GM12878 (cell line): ENCODE measurements at regions of chr17 and their contacts with region 1.

Region 1: GRCh38 chr17:27407916-27408846 is 48.1 kb upstream of the KSR1 start:
- DNase-seq: no peak
- ATAC-seq: no peak
- H3K4me3 ChIP-seq: no peak overlapping the region
- H3K27ac ChIP-seq: no peak overlapping the region
- H3K4me1 ChIP-seq: peaks cover 2% of the 10 kb centered on the region; the same call in 1 of the 2 replicates
- H3K27me3 ChIP-seq: peaks cover 1 to 3% of the 10 kb centered on the region in 2 experiments; a peak in 1 of 4 replicates
- CTCF ChIP-seq: no peak
- EP300 ChIP-seq: no peak
- POLR2A ChIP-seq: no peak
- RAD21 ChIP-seq: no peak

Region 2: GRCh38 chr17:27323524-27324206 is 84.5 kb before region 1 on chr17:
- CTCF ChIA-PET with region 1: no interaction called
- POLR2A ChIA-PET with region 1: no interaction called
- RAD21 ChIA-PET with region 1: no interaction called
- SMC1A ChIA-PET with region 1: no interaction called
- in situ Hi-C with region 1: no loop called
- intact Hi-C with region 1: no loop called
- DNase-seq: no peak
- ATAC-seq: no peak
- H3K4me3 ChIP-seq: no peak overlapping the region
- H3K27ac ChIP-seq: no peak overlapping the region
- H3K4me1 ChIP-seq: no peaks in the 10 kb centered on the region
- H3K27me3 ChIP-seq: no peaks in the 10 kb centered on the region
- CTCF ChIP-seq: no peak
- EP300 ChIP-seq: no peak
- POLR2A ChIP-seq: no peak
- RAD21 ChIP-seq: no peak

Region 3: GRCh38 chr17:27345141-27345904 is 62.9 kb before region 1 on chr17:
- CTCF ChIA-PET with region 1: no interaction called
- POLR2A ChIA-PET with region 1: no interaction called
- RAD21 ChIA-PET with region 1: no interaction called
- SMC1A ChIA-PET with region 1: no interaction called
- in situ Hi-C with region 1: loop called (anchors 10 kb)
- intact Hi-C with region 1: no loop called
- DNase-seq: no peak
- ATAC-seq: no peak
- H3K4me3 ChIP-seq: no peak overlapping the region
- H3K27ac ChIP-seq: no peak overlapping the region
- H3K4me1 ChIP-seq: peaks cover 17% of the 10 kb centered on the region
- H3K27me3 ChIP-seq: no peaks in the 10 kb centered on the region
- CTCF ChIP-seq: no peak
- EP300 ChIP-seq: no peak
- POLR2A ChIP-seq: no peak
- RAD21 ChIP-seq: no peak

Region 4: DNA sequence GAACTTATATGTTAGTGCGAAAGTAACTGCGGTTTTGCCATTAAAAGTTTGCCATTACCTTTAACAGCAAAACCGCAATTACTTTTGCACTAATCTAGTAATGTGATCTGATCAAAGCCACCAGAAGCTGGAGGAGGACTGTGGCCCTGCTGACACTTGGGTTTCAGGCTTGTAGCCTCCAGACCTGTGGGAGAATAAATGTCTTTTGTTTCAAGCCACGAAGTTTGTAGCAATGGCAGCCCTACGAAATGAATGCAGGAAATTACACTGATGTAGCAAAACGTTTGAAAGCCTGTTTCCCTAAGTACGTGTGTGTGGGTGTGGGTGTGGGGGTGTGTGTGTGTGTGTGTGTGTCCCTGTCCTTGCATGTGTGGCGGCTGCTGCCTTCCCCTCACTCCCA is 47.7 kb before region 1 on chr17:
- CTCF ChIA-PET with region 1: no interaction called
- POLR2A ChIA-PET with region 1: interaction called, 13 read pairs
- RAD21 ChIA-PET with region 1: no interaction called
- SMC1A ChIA-PET with region 1: interaction called, 4 read pairs
- in situ Hi-C with region 1: no loop called
- intact Hi-C with region 1: no loop called
- DNase-seq: no peak
- ATAC-seq: no peak
- H3K4me3 ChIP-seq: no peak overlapping the region
- H3K27ac ChIP-seq: no peak overlapping the region
- H3K4me1 ChIP-seq: no peaks in the 10 kb centered on the region
- H3K27me3 ChIP-seq: no peaks in the 10 kb centered on the region
- CTCF ChIP-seq: no peak
- EP300 ChIP-seq: no peak
- POLR2A ChIP-seq: no peak
- RAD21 ChIP-seq: no peak

Region 5: DNA sequence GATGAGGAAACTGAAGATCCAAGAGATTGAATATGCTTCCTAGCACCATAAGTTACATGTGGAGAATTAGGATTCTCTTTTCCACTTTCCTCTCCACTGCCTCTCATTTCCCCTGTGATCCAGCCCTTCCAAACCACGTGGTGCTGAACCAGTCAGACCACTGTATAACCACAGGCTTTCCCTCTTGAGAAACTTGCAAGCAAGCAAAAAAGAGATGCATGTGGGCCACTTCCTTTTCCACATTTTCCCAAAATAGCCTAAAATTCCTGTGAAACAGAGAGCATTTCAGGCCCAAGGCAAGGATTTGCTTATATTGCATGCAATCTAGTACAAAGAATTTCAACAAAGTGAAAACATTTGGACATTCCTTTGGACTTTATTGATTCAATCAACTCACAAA is 11.2 kb before region 1 on chr17:
- CTCF ChIA-PET with region 1: no interaction called
- POLR2A ChIA-PET with region 1: no interaction called
- RAD21 ChIA-PET with region 1: no interaction called
- SMC1A ChIA-PET with region 1: interaction called, 4 read pairs
- in situ Hi-C with region 1: no loop called
- intact Hi-C with region 1: loop called (anchors 1 kb)
- DNase-seq: no peak
- ATAC-seq: no peak
- H3K4me3 ChIP-seq: no peak overlapping the region
- H3K27ac ChIP-seq: no peak overlapping the region
- H3K4me1 ChIP-seq: no peaks in the 10 kb centered on the region
- H3K27me3 ChIP-seq: no peaks in the 10 kb centered on the region; a peak in 1 of 4 replicates
- CTCF ChIP-seq: no peak
- EP300 ChIP-seq: no peak
- POLR2A ChIP-seq: no peak
- RAD21 ChIP-seq: no peak

Region 6: DNA sequence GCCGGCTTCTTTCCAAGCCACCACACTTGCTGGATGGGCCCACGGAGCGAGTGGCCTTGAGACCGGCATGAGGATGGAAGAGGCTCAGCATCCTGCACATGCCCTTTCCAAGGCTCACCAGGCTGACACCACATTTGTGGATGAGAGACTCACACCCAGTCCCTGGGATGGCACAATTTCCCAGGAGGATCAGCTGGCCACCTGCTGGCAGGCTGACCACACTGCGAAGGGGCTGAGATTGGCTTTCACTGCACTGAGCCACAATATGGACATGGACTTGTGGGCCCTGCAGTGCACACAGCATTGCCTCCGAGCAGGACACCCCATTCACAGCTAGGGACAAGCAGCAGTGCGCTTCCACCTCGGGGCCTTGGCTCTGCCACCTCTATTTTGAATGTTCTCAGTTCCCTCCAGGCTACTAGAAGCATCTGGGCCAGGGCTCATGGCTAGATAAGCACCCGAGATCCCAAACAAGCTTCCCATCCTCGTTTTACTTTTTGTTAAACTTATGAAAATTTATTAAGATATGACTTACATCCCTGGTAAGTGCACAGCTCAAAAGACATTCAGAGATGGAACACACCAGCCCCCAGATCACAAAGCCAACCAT is 22.8 kb after region 1 on chr17:
- CTCF ChIA-PET with region 1: no interaction called
- POLR2A ChIA-PET with region 1: no interaction called
- RAD21 ChIA-PET with region 1: no interaction called
- SMC1A ChIA-PET with region 1: interaction called, 4 read pairs
- in situ Hi-C with region 1: no loop called
- intact Hi-C with region 1: loop called (anchors 1 kb)
- DNase-seq: no peak
- ATAC-seq: peak; percentile 76
- H3K4me3 ChIP-seq: no peak overlapping the region
- H3K27ac ChIP-seq: no peak overlapping the region
- H3K4me1 ChIP-seq: no peaks in the 10 kb centered on the region
- H3K27me3 ChIP-seq: no peaks in the 10 kb centered on the region
- CTCF ChIP-seq: peak; percentile 25 to 57 (median 30); a peak in 2 of 6 replicates
- EP300 ChIP-seq: no peak
- POLR2A ChIP-seq: no peak
- RAD21 ChIP-seq: no peak

Region 7: GRCh38 chr17:27471321-27472269 is 63.4 kb after region 1 on chr17:
- CTCF ChIA-PET with region 1: no interaction called
- POLR2A ChIA-PET with region 1: no interaction called
- RAD21 ChIA-PET with region 1: no interaction called
- SMC1A ChIA-PET with region 1: no interaction called
- in situ Hi-C with region 1: no loop called
- intact Hi-C with region 1: no loop called
- DNase-seq: peak; percentile 97
- ATAC-seq: peak; percentile 69
- H3K4me3 ChIP-seq: no peak overlapping the region; the same call in 1 of the 2 replicates
- H3K27ac ChIP-seq: peak overlapping the region; percentile 98
- H3K4me1 ChIP-seq: peaks cover 86% of the 10 kb centered on the region
- H3K27me3 ChIP-seq: no peaks in the 10 kb centered on the region
- CTCF ChIP-seq: no peak
- EP300 ChIP-seq: peak; percentile 98 to 99
- POLR2A ChIP-seq: no peak
- RAD21 ChIP-seq: no peak

Region 8: GRCh38 chr17:27628376-27628775 is 220.2 kb after region 1 on chr17:
- CTCF ChIA-PET with region 1: no interaction called
- POLR2A ChIA-PET with region 1: no interaction called
- RAD21 ChIA-PET with region 1: no interaction called
- SMC1A ChIA-PET with region 1: no interaction called
- in situ Hi-C with region 1: no loop called
- intact Hi-C with region 1: no loop called
- DNase-seq: no peak
- ATAC-seq: no peak
- H3K4me3 ChIP-seq: no peak overlapping the region
- H3K27ac ChIP-seq: no peak overlapping the region
- H3K4me1 ChIP-seq: peaks cover 7% of the 10 kb centered on the region
- H3K27me3 ChIP-seq: no peaks in the 10 kb centered on the region
- CTCF ChIP-seq: no peak
- EP300 ChIP-seq: no peak
- POLR2A ChIP-seq: no peak
- RAD21 ChIP-seq: no peak